ENCODE measurements at regions of chr13 and their contacts with region 1.

Region 1: GRCh38 chr13:27171827-27172494 is 350 bp upstream of the USP12 start:
- DNase-seq: peak; percentile 88 to 97 (median 92)
- ATAC-seq: peak; percentile 84
- H3K4me3 ChIP-seq: peak overlapping the region; percentile 72 to 81
- H3K4me3 Mint-ChIP-seq: peak overlapping the region; percentile 79
- H3K27ac ChIP-seq: peak overlapping the region; percentile 74 to 91
- H3K27ac Mint-ChIP-seq: peak overlapping the region; percentile 89
- H3K4me1 ChIP-seq: peaks cover 30% of the 10 kb centered on the region
- H3K4me1 Mint-ChIP-seq: peaks cover 42% of the 10 kb centered on the region
- H3K27me3 ChIP-seq: no peaks in the 10 kb centered on the region
- H3K27me3 Mint-ChIP-seq: no peaks in the 10 kb centered on the region
- CTCF ChIP-seq: no peak

Region 2: GRCh38 chr13:26186118-26186870 is 985.7 kb before region 1 on chr13:
- CTCF ChIA-PET with region 1: no interaction called
- POLR2A ChIA-PET with region 1: no interaction called
- intact Hi-C with region 1: loop called in 1 of 2 experiments (anchors 5 kb)
- DNase-seq: peak; percentile 83 to 98 (median 89)
- ATAC-seq: peak; percentile 79
- H3K4me3 ChIP-seq: peak overlapping the region; percentile 77 to 82
- H3K4me3 Mint-ChIP-seq: peak overlapping the region; percentile 88
- H3K27ac ChIP-seq: peak overlapping the region; percentile 76 to 80
- H3K27ac Mint-ChIP-seq: peak overlapping the region; percentile 95
- H3K4me1 ChIP-seq: peaks cover 9% of the 10 kb centered on the region
- H3K4me1 Mint-ChIP-seq: peaks cover 36% of the 10 kb centered on the region
- H3K27me3 ChIP-seq: no peaks in the 10 kb centered on the region
- H3K27me3 Mint-ChIP-seq: no peaks in the 10 kb centered on the region
- CTCF ChIP-seq: peak; percentile 50

Region 3: DNA sequence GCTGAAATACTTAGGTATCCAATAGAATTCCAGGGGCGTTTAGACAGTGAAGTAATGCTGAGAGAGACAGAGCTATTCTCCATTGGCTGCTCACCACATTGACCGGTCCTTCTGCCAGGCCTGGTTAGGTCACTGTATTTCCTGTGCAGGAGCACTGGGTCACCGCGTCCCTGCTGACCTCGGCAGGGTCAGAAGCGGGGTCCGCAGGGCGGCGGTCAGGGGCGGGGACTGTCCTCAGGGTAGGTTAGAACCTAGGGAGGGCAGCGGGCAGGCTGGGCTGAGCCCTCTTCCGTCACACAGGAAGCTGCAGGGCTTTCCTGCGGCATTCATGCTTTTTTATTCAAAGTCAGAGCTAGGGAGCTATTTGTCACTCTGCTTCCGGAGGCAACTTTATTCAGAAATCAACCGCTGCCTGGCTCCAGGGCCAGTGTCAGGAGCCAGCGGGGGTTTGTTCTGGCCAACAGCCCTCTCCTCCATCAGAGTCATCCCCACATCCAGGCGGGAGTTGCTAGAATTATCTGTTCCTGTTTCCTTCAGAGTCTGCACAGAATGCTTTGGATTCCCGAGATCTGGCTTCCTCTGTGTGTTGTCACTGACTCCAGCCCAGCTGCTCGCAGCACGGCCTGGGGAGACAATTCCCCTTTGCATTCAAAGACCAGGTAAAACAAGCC is 695.7 kb before region 1 on chr13:
- CTCF ChIA-PET with region 1: no interaction called
- POLR2A ChIA-PET with region 1: no interaction called
- intact Hi-C with region 1: no loop called
- DNase-seq: peak in 3 of 9 experiments; percentile 12 to 45 (median 34)
- ATAC-seq: no peak
- H3K4me3 ChIP-seq: peak overlapping the region in 1 of 2 experiments; percentile 19
- H3K4me3 Mint-ChIP-seq: no peak overlapping the region
- H3K27ac ChIP-seq: no peak overlapping the region
- H3K27ac Mint-ChIP-seq: no peak overlapping the region
- H3K4me1 ChIP-seq: peaks cover 9% of the 10 kb centered on the region
- H3K4me1 Mint-ChIP-seq: no peaks in the 10 kb centered on the region
- H3K27me3 ChIP-seq: no peaks in the 10 kb centered on the region
- H3K27me3 Mint-ChIP-seq: no peaks in the 10 kb centered on the region
- CTCF ChIP-seq: no peak

Region 4: GRCh38 chr13:27065582-27065981 is 106.4 kb before region 1 on chr13:
- CTCF ChIA-PET with region 1: no interaction called
- POLR2A ChIA-PET with region 1: no interaction called
- intact Hi-C with region 1: no loop called
- DNase-seq: no peak
- ATAC-seq: no peak
- H3K4me3 ChIP-seq: no peak overlapping the region
- H3K4me3 Mint-ChIP-seq: no peak overlapping the region
- H3K27ac ChIP-seq: no peak overlapping the region
- H3K27ac Mint-ChIP-seq: no peak overlapping the region
- H3K4me1 ChIP-seq: no peaks in the 10 kb centered on the region
- H3K4me1 Mint-ChIP-seq: peaks cover 10% of the 10 kb centered on the region
- H3K27me3 ChIP-seq: no peaks in the 10 kb centered on the region
- H3K27me3 Mint-ChIP-seq: no peaks in the 10 kb centered on the region
- CTCF ChIP-seq: no peak

Region 5: DNA sequence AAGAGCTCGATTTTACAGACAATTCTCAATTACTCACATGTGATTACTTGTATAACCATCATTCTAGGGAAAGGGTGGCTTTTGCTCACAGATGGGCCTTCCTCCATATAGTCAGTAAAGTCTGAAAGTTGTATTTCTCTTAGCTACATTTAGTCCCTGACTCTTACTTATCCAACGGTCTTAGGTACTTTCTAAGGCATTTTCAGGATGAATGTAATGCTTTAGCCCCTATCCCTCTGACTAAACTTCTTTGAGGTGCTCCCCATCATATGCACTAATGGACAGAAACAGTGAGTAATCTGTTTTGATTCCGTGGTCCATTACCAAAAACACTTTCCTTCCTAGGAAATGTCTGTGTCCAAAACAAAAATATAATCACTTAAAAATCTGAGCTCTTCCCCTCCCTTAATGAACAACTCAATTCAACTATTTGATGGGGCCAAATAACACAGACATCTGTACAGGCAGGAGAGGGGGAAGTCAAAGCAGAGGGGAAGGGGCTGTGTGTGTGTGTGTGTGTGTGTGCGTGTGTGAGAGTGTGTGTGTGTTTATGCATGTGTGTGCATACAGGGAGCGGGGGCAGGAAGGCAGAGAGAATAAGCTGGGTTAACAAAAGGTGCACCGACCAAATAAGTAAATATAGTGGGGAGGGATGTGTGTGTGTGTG is 85.2 kb before region 1 on chr13:
- CTCF ChIA-PET with region 1: no interaction called
- POLR2A ChIA-PET with region 1: no interaction called
- intact Hi-C with region 1: loop called in 1 of 2 experiments (anchors 5 kb)
- DNase-seq: no peak
- ATAC-seq: no peak
- H3K4me3 ChIP-seq: no peak overlapping the region
- H3K4me3 Mint-ChIP-seq: no peak overlapping the region
- H3K27ac ChIP-seq: no peak overlapping the region
- H3K27ac Mint-ChIP-seq: no peak overlapping the region
- H3K4me1 ChIP-seq: no peaks in the 10 kb centered on the region
- H3K4me1 Mint-ChIP-seq: peaks cover 12% of the 10 kb centered on the region
- H3K27me3 ChIP-seq: no peaks in the 10 kb centered on the region
- H3K27me3 Mint-ChIP-seq: no peaks in the 10 kb centered on the region
- CTCF ChIP-seq: no peak

Region 6: GRCh38 chr13:27251166-27252091 is 79.5 kb after region 1 on chr13 and contains the start of gene RPL21:
- CTCF ChIA-PET with region 1: no interaction called
- POLR2A ChIA-PET with region 1: interaction called, 10 read pairs
- intact Hi-C with region 1: loop called (anchors 1 kb)
- DNase-seq: peak; percentile 85 to 98 (median 91)
- ATAC-seq: peak; percentile 88
- H3K4me3 ChIP-seq: peak within 1 kb of the TSS; percentile 88 to 93
- H3K4me3 Mint-ChIP-seq: peak within 1 kb of the TSS; percentile 99
- H3K27ac ChIP-seq: peak within 1 kb of the TSS; percentile 96 to 98
- H3K27ac Mint-ChIP-seq: peak within 1 kb of the TSS; percentile 100
- H3K4me1 ChIP-seq: peaks cover 30% of the 10 kb centered on the region
- H3K4me1 Mint-ChIP-seq: peaks cover 57% of the 10 kb centered on the region
- H3K27me3 ChIP-seq: no peaks in the 10 kb centered on the region
- H3K27me3 Mint-ChIP-seq: no peaks in the 10 kb centered on the region
- CTCF ChIP-seq: no peak
- total RNA-seq, gene RPL21: 2,340 to 2,437 TPM

Region 7: DNA sequence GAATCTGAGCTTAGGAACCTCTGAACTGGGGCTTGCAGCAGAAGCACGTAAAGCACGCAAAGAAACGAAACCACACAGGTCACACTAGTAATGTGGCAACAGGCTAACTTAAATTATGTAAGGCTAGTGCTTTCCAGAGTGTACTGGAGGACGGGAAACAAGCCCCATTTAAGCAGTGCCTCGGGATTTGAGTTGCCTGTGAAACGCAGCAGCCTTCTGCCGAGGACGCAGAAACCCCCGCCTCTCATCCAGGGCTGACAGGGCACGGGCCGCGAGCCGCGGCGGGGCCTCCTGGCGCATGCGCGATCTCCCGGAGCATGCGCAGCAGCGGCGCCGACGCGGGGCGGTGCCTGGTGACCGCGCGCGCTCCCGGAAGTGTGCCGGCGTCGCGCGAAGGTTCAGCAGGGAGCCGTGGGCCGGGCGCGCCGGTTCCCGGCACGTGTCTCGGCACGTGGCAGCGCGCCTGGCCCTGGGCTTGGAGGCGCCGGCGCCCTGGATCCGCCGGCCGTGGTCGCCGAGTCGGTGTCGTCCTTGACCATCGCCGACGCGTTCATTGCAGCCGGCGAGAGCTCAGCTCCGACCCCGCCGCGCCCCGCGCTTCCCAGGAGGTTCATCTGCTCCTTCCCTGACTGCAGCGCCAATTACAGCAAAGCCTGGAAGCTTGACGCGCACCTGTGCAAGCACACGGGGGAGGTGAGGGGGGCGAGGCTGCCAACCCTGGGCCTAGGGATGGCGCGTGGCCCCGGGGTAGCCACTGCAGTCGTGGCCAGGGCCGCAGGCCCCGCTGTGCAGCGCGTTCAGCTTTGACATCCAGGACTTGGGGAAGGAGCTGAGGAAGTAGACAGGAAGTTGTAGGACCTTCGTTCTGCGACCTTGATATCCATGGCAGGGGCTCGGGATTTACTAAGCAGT is 252.5 kb after region 1 on chr13 and contains the start of gene GTF3A:
- CTCF ChIA-PET with region 1: no interaction called
- POLR2A ChIA-PET with region 1: interaction called, 3 read pairs
- intact Hi-C with region 1: loop called (anchors 5 kb)
- DNase-seq: peak; percentile 74 to 95 (median 87)
- ATAC-seq: peak; percentile 57
- H3K4me3 ChIP-seq: peak within 1 kb of the TSS; percentile 76 to 83
- H3K4me3 Mint-ChIP-seq: peak within 1 kb of the TSS; percentile 82
- H3K27ac ChIP-seq: peak within 1 kb of the TSS; percentile 85 to 95
- H3K27ac Mint-ChIP-seq: peak within 1 kb of the TSS; percentile 97
- H3K4me1 ChIP-seq: peaks cover 43% of the 10 kb centered on the region
- H3K4me1 Mint-ChIP-seq: peaks cover 48% of the 10 kb centered on the region
- H3K27me3 ChIP-seq: no peaks in the 10 kb centered on the region
- H3K27me3 Mint-ChIP-seq: no peaks in the 10 kb centered on the region
- CTCF ChIP-seq: no peak
- total RNA-seq, gene GTF3A: 157 TPM

Region 8: DNA sequence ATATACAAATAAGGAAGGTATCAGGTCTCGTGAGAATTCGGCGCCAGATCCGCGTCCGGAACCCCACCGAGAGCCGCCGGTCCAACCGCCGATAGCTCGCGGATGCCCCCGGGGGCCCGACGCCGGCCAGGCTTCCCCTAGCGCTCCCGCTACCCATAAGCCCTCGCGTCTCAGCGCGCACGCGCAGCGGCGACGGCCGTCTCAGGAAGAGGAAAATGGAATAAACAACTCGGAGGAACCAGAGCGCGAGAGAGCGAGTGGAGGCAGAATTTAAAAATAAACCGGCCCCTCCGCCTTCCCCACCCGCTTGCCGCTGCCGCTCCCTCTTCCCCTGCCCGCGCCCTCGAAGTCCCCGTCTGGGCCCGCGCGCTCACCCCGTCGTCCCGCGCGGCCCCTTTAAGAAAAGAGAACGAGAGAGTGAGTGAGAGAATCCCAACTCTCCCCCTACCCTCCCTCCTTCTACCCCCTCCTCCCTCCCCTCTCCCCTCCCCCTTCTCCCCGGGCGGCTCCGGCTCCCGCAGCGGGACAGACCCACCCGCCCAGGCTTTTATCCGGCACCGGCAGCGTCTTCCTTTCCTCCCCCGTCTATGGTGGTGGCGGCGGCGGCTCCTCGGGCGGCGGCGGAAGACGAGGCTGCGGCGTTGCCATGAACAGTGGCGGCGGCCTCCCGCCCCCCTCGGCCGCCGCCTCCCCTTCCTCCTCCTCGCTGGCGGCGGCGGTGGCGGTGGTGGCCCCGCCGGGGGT is 966.2 kb after region 1 on chr13 and contains the start of gene PAN3:
- CTCF ChIA-PET with region 1: no interaction called
- POLR2A ChIA-PET with region 1: no interaction called
- intact Hi-C with region 1: loop called in 1 of 2 experiments (anchors 5 kb)
- DNase-seq: peak; percentile 83 to 96 (median 93)
- ATAC-seq: peak; percentile 54
- H3K4me3 ChIP-seq: peak within 1 kb of the TSS; percentile 67 to 80
- H3K4me3 Mint-ChIP-seq: peak within 1 kb of the TSS; percentile 97
- H3K27ac ChIP-seq: peak within 1 kb of the TSS; percentile 90 to 97
- H3K27ac Mint-ChIP-seq: peak within 1 kb of the TSS; percentile 98
- H3K4me1 ChIP-seq: peaks cover 35% of the 10 kb centered on the region
- H3K4me1 Mint-ChIP-seq: peaks cover 52% of the 10 kb centered on the region
- H3K27me3 ChIP-seq: no peaks in the 10 kb centered on the region
- H3K27me3 Mint-ChIP-seq: no peaks in the 10 kb centered on the region
- CTCF ChIP-seq: no peak
- total RNA-seq, gene PAN3: 55.8 to 55.9 TPM

Measured in CD8-positive, alpha-beta T cell (primary cell).